Heart right ventricle (tissue), 16 donors: ENCODE measurements at regions of chr5 and their contacts with region 1.

Region 1: GRCh38 chr5:89229331-89230070 is 346.5 kb upstream of the MEF2C start:
- DNase-seq: no peak
- ATAC-seq: no peak
- H3K4me3 ChIP-seq: no peak overlapping the region
- H3K27ac ChIP-seq: no peak overlapping the region
- H3K4me1 ChIP-seq: no peaks in the 10 kb centered on the region
- H3K27me3 ChIP-seq: no peaks in the 10 kb centered on the region
- CTCF ChIP-seq: no peak

Region 2: GRCh38 chr5:87499478-87500410 is 1729.8 kb before region 1 on chr5:
- intact Hi-C with region 1: loop called in 1 of 10 experiments (anchors 5 kb)
- DNase-seq: peak in 1 of 2 donors; percentile 10
- ATAC-seq: peak in 1 of 8 donors; percentile 18
- H3K4me3 ChIP-seq: no peak overlapping the region
- H3K27ac ChIP-seq: no peak overlapping the region
- H3K4me1 ChIP-seq: no peaks in the 10 kb centered on the region
- H3K27me3 ChIP-seq: no peaks in the 10 kb centered on the region
- CTCF ChIP-seq: no peak

Region 3: DNA sequence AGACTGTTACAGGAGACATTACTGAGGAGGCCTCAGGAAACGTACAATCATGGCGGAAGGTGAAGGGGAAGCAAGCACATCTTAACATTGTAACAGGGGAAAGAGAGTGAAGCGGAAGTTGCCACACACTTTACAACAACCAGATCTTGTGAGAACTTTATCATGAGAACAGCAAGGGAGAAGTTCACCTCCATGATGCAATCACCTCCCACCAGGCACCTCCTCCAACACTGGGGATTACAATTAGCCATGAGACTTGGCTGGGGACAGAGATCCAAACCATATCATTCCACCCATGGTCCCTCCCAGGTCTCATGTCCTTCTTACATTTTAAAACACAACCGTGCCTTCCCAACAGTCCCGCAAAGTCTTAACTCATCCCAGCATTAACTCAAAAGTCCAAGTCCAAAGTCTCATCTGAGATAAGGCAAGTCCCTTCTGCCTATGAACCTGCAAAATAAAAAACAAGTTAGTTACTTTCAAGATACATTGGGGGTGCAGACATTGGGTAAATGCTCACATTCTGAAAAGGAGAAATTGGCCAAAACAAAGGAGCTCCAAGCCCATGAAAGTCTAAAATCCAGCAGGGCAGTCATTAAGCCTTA is 1099.2 kb before region 1 on chr5:
- intact Hi-C with region 1: no loop called
- DNase-seq: no peak
- ATAC-seq: no peak
- H3K4me3 ChIP-seq: no peak overlapping the region
- H3K27ac ChIP-seq: no peak overlapping the region
- H3K4me1 ChIP-seq: no peaks in the 10 kb centered on the region
- H3K27me3 ChIP-seq: peaks cover 0 to 26% (median 0%) of the 10 kb centered on the region in 7 donors
- CTCF ChIP-seq: no peak

Region 4: DNA sequence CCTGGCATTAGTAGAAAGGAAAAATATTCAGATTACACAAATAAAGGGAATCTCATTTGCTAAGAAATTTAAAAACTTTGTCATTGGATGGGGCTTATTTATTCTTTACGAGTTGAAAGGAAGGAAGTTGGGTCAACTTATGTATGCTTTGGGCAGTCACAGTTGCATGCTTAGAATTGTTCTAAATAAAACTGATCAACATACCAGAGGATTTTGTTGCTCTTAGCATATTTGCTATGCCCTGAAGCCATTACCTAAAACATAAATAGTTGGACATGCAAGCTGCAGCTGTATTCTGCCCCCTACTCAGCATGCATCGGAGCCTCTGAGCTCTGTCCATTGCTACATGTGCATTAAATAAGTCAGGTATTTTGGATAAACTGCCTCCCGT is 173.8 kb before region 1 on chr5:
- intact Hi-C with region 1: no loop called
- DNase-seq: no peak
- ATAC-seq: no peak
- H3K4me3 ChIP-seq: no peak overlapping the region
- H3K27ac ChIP-seq: no peak overlapping the region
- H3K4me1 ChIP-seq: no peaks in the 10 kb centered on the region
- H3K27me3 ChIP-seq: no peaks in the 10 kb centered on the region
- CTCF ChIP-seq: no peak